ENCODE measurements at regions of chr2 and their contacts with region 1.

Region 1: GRCh38 chr2:226118471-226119430 is 680.9 kb downstream of the IRS1 start:
- DNase-seq: peak; percentile 92
- ATAC-seq: peak; percentile 53
- H3K4me3 ChIP-seq: peak overlapping the region; percentile 41
- H3K27ac ChIP-seq: peak overlapping the region; percentile 99
- H3K4me1 ChIP-seq: peaks cover 60% of the 10 kb centered on the region
- H3K27me3 ChIP-seq: no peaks in the 10 kb centered on the region
- CTCF ChIP-seq: no peak

Region 2: DNA sequence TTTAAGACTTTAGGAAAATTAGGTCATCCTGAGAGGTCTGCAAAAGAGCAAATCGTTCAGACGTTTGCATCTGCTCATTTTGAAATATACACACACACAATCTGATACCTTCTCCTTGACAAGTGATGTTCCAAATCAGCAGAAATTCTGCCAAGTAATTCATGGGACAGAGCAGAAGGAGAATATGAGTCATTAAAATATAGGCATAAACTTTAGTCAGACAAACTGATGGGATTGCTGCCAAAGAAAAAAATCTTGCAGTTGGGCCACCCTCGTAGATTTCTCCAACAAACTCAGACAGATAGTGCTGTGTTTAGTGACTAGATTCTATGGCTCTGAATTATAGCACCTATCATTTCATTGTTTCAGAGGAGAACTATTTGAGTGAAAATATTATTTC is 382.9 kb before region 1 on chr2:
- CTCF ChIA-PET with region 1: no interaction called
- POLR2A ChIA-PET with region 1: no interaction called
- intact Hi-C with region 1: loop called (anchors 1 kb)
- DNase-seq: peak; percentile 95
- ATAC-seq: peak; percentile 48
- H3K4me3 ChIP-seq: no peak overlapping the region
- H3K27ac ChIP-seq: peak overlapping the region; percentile 81
- H3K4me1 ChIP-seq: peaks cover 34% of the 10 kb centered on the region
- H3K27me3 ChIP-seq: no peaks in the 10 kb centered on the region
- CTCF ChIP-seq: no peak

Region 3: GRCh38 chr2:226185616-226186211 is 67.0 kb after region 1 on chr2:
- CTCF ChIA-PET with region 1: interaction called, 3 read pairs
- POLR2A ChIA-PET with region 1: no interaction called
- intact Hi-C with region 1: loop called (anchors 1 kb)
- DNase-seq: peak; percentile 92
- ATAC-seq: peak; percentile 83
- H3K4me3 ChIP-seq: peak overlapping the region; percentile 57
- H3K27ac ChIP-seq: peak overlapping the region; percentile 95
- H3K4me1 ChIP-seq: peaks cover 46% of the 10 kb centered on the region
- H3K27me3 ChIP-seq: no peaks in the 10 kb centered on the region
- CTCF ChIP-seq: no peak

Region 4: DNA sequence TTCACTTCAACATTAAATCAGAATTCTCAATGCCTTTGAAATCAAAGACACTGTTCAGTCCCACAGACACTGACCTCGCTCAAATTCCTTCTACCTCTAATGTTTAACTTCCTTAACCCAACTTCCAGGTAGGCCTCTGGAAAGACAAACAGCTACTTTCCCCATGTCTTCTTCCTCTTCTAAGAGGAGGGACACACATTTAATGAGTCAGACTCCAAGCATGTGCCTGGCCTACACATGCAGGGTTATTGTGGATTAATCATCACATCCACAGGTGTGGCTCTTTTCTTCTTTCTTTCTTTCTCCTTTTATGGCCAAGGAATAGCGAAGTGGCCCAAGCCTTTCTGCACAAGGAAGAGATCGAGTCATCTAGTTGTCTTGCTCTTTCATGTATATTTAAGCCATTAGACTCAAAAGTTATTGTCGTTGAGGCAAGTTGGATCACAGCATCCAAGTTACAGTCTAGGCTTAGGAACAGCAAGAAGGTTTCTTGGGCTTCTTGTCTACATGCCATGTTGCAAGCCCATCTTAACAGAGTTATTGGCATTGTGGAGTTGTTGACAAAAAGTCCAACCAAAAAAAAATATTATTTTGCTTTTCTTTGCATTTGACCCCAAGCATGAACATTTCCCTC is 293.1 kb after region 1 on chr2:
- CTCF ChIA-PET with region 1: no interaction called
- POLR2A ChIA-PET with region 1: no interaction called
- intact Hi-C with region 1: loop called (anchors 5 kb)
- DNase-seq: peak; percentile 96
- ATAC-seq: peak; percentile 98
- H3K4me3 ChIP-seq: no peak overlapping the region
- H3K27ac ChIP-seq: peak overlapping the region; percentile 78
- H3K4me1 ChIP-seq: peaks cover 21% of the 10 kb centered on the region
- H3K27me3 ChIP-seq: no peaks in the 10 kb centered on the region
- CTCF ChIP-seq: no peak

Region 5: DNA sequence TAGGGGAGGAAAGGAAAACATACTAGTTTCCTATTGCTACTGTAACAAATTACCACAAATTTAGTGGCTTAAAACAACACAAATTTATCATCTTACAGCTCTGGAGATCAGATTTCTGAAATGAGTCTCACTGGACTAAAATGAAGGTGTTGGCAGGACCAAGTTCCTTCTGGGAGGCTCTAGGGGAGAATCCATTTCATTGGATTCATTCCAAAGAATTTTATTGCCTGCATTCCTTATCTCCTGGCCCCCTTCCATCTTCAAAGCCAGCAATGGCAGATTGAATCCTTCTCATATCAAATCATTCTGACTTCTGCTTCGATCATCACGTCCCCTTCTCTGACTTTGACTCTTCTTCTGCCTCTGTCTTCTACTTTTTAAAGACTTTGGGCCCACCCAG is 430.0 kb after region 1 on chr2:
- CTCF ChIA-PET with region 1: no interaction called
- POLR2A ChIA-PET with region 1: no interaction called
- intact Hi-C with region 1: no loop called
- DNase-seq: no peak
- ATAC-seq: no peak
- H3K4me3 ChIP-seq: no peak overlapping the region
- H3K27ac ChIP-seq: no peak overlapping the region
- H3K4me1 ChIP-seq: peaks cover 14% of the 10 kb centered on the region
- H3K27me3 ChIP-seq: no peaks in the 10 kb centered on the region
- CTCF ChIP-seq: no peak

Region 6: DNA sequence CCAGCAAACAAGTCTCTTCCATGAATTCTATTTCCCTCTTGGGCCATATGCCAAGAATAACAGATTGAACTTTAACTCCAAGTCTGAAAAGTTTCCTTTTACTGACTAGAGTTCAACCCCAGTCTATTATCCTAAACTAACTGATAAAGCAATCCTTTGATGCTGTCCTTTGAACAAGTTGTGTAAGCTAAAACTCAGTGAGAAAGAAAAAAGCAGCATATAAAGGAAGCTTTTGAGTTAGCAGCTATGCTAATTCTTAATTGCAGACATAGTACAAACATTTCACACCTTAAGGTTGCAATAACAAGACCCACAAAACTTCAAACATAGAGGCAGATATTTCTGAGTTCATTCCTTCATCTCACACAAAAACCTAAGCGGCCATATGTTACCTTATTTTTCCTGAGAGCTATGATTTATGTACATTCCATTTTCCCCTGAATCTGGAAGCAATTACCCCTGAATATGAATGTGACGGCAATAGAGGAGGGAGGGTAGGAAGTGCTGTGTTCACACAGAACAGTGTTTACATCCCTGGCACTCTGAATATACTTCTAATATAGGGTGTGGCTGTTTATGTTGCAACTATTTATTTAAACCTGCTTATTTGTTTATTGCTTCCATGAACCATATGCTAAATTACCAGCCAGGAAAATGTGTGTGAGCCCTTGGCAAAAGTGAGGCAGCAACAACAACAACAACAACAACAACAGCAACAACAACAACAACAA is 500.3 kb after region 1 on chr2:
- CTCF ChIA-PET with region 1: no interaction called
- POLR2A ChIA-PET with region 1: no interaction called
- intact Hi-C with region 1: loop called (anchors 10 kb)
- DNase-seq: no peak
- ATAC-seq: no peak
- H3K4me3 ChIP-seq: no peak overlapping the region
- H3K27ac ChIP-seq: no peak overlapping the region
- H3K4me1 ChIP-seq: peaks cover 10% of the 10 kb centered on the region
- H3K27me3 ChIP-seq: no peaks in the 10 kb centered on the region
- CTCF ChIP-seq: no peak

Measured in PC-3 (cell line).